ENCODE measurements at regions of chr11 and their contacts with region 1.

Region 1: GRCh38 chr11:64742889-64743590 is 902 bp downstream of the RASGRP2 start:
- DNase-seq: peak; percentile 58 to 87 (median 72)
- ATAC-seq: peak; percentile 13
- H3K4me3 ChIP-seq: peak overlapping the region; percentile 98
- H3K4me3 Mint-ChIP-seq: peak overlapping the region; percentile 85
- H3K27ac ChIP-seq: peak overlapping the region; percentile 89 to 95
- H3K27ac Mint-ChIP-seq: peak overlapping the region; percentile 92
- H3K4me1 ChIP-seq: peaks cover 67% of the 10 kb centered on the region
- H3K4me1 Mint-ChIP-seq: peaks cover 46% of the 10 kb centered on the region
- H3K27me3 ChIP-seq: no peaks in the 10 kb centered on the region
- H3K27me3 Mint-ChIP-seq: no peaks in the 10 kb centered on the region
- CTCF ChIP-seq: peak; percentile 80

Region 2: DNA sequence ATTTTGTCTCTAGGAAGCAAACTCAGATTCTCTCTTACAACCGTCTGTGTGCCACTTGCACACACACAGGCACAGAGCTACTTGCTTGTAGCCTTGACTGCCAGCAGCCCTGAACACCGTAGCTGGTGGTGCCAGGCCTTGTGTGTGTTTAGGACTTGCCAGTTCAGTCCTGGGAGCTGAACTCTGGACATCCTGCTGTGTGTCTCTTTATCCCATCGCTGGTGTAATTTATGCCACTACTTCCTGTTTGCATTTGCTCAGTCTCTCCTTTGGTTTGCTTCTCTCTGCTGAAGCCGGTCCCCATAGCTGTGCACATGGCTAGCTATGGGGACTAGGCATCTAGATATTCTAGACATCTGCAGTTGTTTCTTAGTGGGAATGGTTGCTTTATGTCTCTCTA is 880.1 kb before region 1 on chr11:
- CTCF ChIA-PET with region 1: no interaction called
- POLR2A ChIA-PET with region 1: no interaction called
- intact Hi-C with region 1: no loop called
- DNase-seq: peak in 1 of 14 experiments; percentile 38
- ATAC-seq: peak; percentile 44
- H3K4me3 ChIP-seq: no peak overlapping the region
- H3K4me3 Mint-ChIP-seq: peak overlapping the region; percentile 7
- H3K27ac ChIP-seq: peak overlapping the region; percentile 30 to 52
- H3K27ac Mint-ChIP-seq: peak overlapping the region; percentile 73
- H3K4me1 ChIP-seq: peaks cover 64% of the 10 kb centered on the region
- H3K4me1 Mint-ChIP-seq: peaks cover 59% of the 10 kb centered on the region
- H3K27me3 ChIP-seq: no peaks in the 10 kb centered on the region
- H3K27me3 Mint-ChIP-seq: no peaks in the 10 kb centered on the region
- CTCF ChIP-seq: no peak

Region 3: GRCh38 chr11:64688534-64688982 is 54.5 kb before region 1 on chr11:
- CTCF ChIA-PET with region 1: interaction called, 28 read pairs
- POLR2A ChIA-PET with region 1: interaction called, 8 read pairs
- intact Hi-C with region 1: loop called (anchors 1 kb)
- DNase-seq: peak; percentile 83 to 96 (median 89)
- ATAC-seq: peak; percentile 99
- H3K4me3 ChIP-seq: peak overlapping the region; percentile 29
- H3K4me3 Mint-ChIP-seq: peak overlapping the region; percentile 14
- H3K27ac ChIP-seq: no peak overlapping the region
- H3K27ac Mint-ChIP-seq: no peak overlapping the region
- H3K4me1 ChIP-seq: peaks cover 11% of the 10 kb centered on the region
- H3K4me1 Mint-ChIP-seq: peaks cover 25% of the 10 kb centered on the region
- H3K27me3 ChIP-seq: peaks cover 8 to 11% of the 10 kb centered on the region in 2 experiments
- H3K27me3 Mint-ChIP-seq: peaks cover 29% of the 10 kb centered on the region
- CTCF ChIP-seq: peak; percentile 98

Region 4: DNA sequence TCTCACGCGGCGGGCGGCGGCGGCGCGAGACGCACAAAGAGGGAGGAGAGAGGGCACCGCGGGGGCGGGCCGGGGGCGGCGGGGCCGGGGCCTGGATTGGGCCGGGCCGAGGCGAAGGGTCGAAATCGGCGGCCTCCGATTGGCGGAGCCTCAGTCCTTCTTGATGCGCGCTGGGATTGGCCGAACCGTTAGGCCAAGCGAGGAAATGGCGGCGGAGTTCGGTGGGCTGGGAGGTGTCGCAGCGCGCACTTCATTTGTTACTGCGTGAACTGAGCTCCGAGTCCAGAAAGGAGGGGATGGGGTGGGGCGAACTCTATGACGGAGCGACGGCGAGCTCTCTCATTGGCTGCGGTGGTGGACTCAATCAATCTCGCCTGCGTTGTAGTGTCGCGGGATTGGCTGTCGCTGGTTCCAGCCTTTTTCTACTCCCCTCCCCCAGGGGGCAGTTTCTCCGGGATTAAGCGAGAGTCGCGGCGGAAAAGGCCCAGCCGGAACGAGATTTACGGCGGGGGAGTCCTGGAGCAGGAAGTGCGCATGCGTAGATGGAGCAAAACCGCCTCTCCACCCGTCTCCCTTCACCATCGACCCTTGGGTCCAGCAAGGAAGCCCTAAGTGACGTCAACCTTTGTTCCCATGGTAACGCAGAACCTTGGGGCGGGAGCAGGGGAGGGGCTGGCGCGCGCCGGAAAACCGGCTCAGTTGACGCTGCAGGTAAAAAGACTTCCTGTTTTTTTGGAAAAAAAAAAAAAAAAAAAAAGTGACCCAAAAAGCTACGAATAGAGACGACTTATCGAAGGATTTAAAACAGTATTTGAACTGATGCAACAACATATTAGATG is 35.7 kb after region 1 on chr11 and contains the start of gene SF1:
- CTCF ChIA-PET with region 1: interaction called, 28 read pairs
- POLR2A ChIA-PET with region 1: interaction called, 596 read pairs
- intact Hi-C with region 1: loop called (anchors 1 to 5 kb)
- DNase-seq: peak; percentile 96 to 100 (median 98)
- ATAC-seq: peak; percentile 81
- H3K4me3 ChIP-seq: peak within 1 kb of the TSS; percentile 74
- H3K4me3 Mint-ChIP-seq: peak within 1 kb of the TSS; percentile 95
- H3K27ac ChIP-seq: peak within 1 kb of the TSS; percentile 94 to 98
- H3K27ac Mint-ChIP-seq: peak within 1 kb of the TSS; percentile 99
- H3K4me1 ChIP-seq: peaks cover 52% of the 10 kb centered on the region
- H3K4me1 Mint-ChIP-seq: peaks cover 70% of the 10 kb centered on the region
- H3K27me3 ChIP-seq: no peaks in the 10 kb centered on the region
- H3K27me3 Mint-ChIP-seq: no peaks in the 10 kb centered on the region
- CTCF ChIP-seq: peak; percentile 14
- total RNA-seq, gene SF1: 1,632 to 1,657 TPM

Region 5: GRCh38 chr11:64810271-64810890 is 67.3 kb after region 1 on chr11 and contains the start of gene MEN1:
- CTCF ChIA-PET with region 1: no interaction called
- POLR2A ChIA-PET with region 1: interaction called, 43 read pairs
- intact Hi-C with region 1: no loop called
- DNase-seq: peak; percentile 45 to 85 (median 69)
- ATAC-seq: peak; percentile 83
- H3K4me3 ChIP-seq: peak within 1 kb of the TSS; percentile 87
- H3K4me3 Mint-ChIP-seq: peak within 1 kb of the TSS; percentile 99
- H3K27ac ChIP-seq: peak within 1 kb of the TSS; percentile 83 to 88
- H3K27ac Mint-ChIP-seq: peak within 1 kb of the TSS; percentile 85
- H3K4me1 ChIP-seq: peaks cover 17% of the 10 kb centered on the region
- H3K4me1 Mint-ChIP-seq: peaks cover 32% of the 10 kb centered on the region
- H3K27me3 ChIP-seq: no peaks in the 10 kb centered on the region
- H3K27me3 Mint-ChIP-seq: no peaks in the 10 kb centered on the region
- CTCF ChIP-seq: no peak
- total RNA-seq, gene MEN1: 16.4 to 17.7 TPM

Region 6: GRCh38 chr11:64878494-64879243 is 135.6 kb after region 1 on chr11 and contains the start of gene EHD1:
- CTCF ChIA-PET with region 1: no interaction called
- POLR2A ChIA-PET with region 1: interaction called, 12 read pairs
- intact Hi-C with region 1: no loop called
- DNase-seq: peak; percentile 99 to 100 (median 100)
- ATAC-seq: peak; percentile 81
- H3K4me3 ChIP-seq: peak within 1 kb of the TSS; percentile 100
- H3K4me3 Mint-ChIP-seq: peak within 1 kb of the TSS; percentile 98
- H3K27ac ChIP-seq: peak within 1 kb of the TSS; percentile 95 to 97
- H3K27ac Mint-ChIP-seq: peak within 1 kb of the TSS; percentile 92
- H3K4me1 ChIP-seq: peaks cover 72% of the 10 kb centered on the region
- H3K4me1 Mint-ChIP-seq: peaks cover 62% of the 10 kb centered on the region
- H3K27me3 ChIP-seq: no peaks in the 10 kb centered on the region
- H3K27me3 Mint-ChIP-seq: no peaks in the 10 kb centered on the region
- CTCF ChIP-seq: peak; percentile 58
- total RNA-seq, gene EHD1: 132 to 139 TPM

Measured in CD4-positive, alpha-beta T cell (primary cell).